A549 (cell line): ENCODE measurements at regions of chr17 and their contacts with region 1.

Region 1: GRCh38 chr17:45385331-45385997 is 47.2 kb downstream of the ARHGAP27 start:
- DNase-seq: peak; percentile 91 to 94
- ATAC-seq: peak; percentile 93 to 97
- H3K4me3 ChIP-seq: no peak overlapping the region
- H3K27ac ChIP-seq: peak overlapping the region; percentile 79 to 97
- H3K4me1 ChIP-seq: peaks cover 50% of the 10 kb centered on the region
- CTCF ChIP-seq: peak; percentile 99
- EP300 ChIP-seq: no peak
- POLR2A ChIP-seq: no peak
- RAD21 ChIP-seq: peak; percentile 100

Region 2: DNA sequence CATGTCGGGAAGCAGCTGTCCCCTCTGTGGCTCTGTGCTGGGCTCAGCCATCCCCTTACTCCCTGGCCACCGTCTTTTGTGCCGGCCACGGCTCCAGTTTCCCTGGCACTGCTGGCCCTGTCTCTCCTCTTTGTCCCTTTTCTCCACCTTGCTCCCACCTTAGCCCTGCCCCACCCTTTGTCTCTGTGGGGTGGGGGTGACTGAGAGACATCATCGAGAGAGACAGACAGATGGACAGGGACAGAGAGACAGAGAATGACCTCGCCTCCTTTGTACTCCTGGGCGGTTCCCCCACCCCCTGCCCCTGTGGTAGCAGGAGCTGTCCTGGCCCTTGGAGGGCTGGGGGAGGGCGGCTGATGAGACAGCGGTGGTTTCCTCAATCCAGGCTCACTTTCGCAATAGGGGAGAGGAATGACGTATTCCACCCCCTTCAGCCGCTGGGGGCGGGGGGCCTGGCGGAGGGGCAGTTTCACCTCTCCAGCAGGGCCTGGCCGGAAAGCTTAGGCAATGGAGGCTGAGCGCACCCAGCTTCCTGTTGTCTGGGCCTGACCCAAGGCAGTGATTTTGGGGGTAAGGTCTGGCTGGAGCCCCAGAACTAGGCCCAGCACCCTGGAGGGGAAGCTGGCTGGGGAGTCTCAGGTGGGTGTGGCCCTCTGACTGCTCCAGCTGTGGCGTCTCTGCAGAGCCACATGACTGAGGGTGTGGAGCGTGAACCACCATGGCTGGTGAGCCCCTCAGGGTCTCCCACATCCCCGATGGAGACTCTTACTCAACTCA is 156.5 kb before region 1 on chr17:
- CTCF ChIA-PET with region 1: interaction called, 299 read pairs
- POLR2A ChIA-PET with region 1: interaction called, 3 read pairs
- DNase-seq: peak; percentile 96 to 99
- ATAC-seq: peak; percentile 63 to 77
- H3K4me3 ChIP-seq: peak overlapping the region; percentile 9; the same call in 1 of the 3 replicates
- H3K27ac ChIP-seq: peak overlapping the region; percentile 97
- H3K4me1 ChIP-seq: peaks cover 85% of the 10 kb centered on the region
- CTCF ChIP-seq: no peak
- EP300 ChIP-seq: peak; percentile 93 to 99
- POLR2A ChIP-seq: peak; percentile 33
- RAD21 ChIP-seq: no peak; a peak in 3 of 5 replicates

Region 3: GRCh38 chr17:45241328-45242011 is 144.0 kb before region 1 on chr17:
- CTCF ChIA-PET with region 1: interaction called, 128 read pairs
- POLR2A ChIA-PET with region 1: no interaction called
- DNase-seq: no peak
- ATAC-seq: no peak
- H3K4me3 ChIP-seq: no peak overlapping the region
- H3K27ac ChIP-seq: no peak overlapping the region; a peak in 1 of 6 replicates
- H3K4me1 ChIP-seq: peaks cover 13% of the 10 kb centered on the region
- CTCF ChIP-seq: no peak
- EP300 ChIP-seq: no peak
- POLR2A ChIP-seq: no peak
- RAD21 ChIP-seq: no peak

Region 4: GRCh38 chr17:45317112-45317928 is 68.1 kb before region 1 on chr17:
- CTCF ChIA-PET with region 1: interaction called, 640 read pairs
- POLR2A ChIA-PET with region 1: interaction called, 8 read pairs
- DNase-seq: peak; percentile 100
- ATAC-seq: peak; percentile 79 to 83
- H3K4me3 ChIP-seq: peak overlapping the region; percentile 69
- H3K27ac ChIP-seq: peak overlapping the region; percentile 95
- H3K4me1 ChIP-seq: peaks cover 73% of the 10 kb centered on the region
- CTCF ChIP-seq: no peak
- EP300 ChIP-seq: no peak
- POLR2A ChIP-seq: peak; percentile 68
- RAD21 ChIP-seq: no peak

Region 5: GRCh38 chr17:45371414-45372327 is 13.8 kb before region 1 on chr17:
- CTCF ChIA-PET with region 1: interaction called, 294 read pairs
- POLR2A ChIA-PET with region 1: interaction called, 3 read pairs
- DNase-seq: peak; percentile 98
- ATAC-seq: peak; percentile 93 to 95
- H3K4me3 ChIP-seq: no peak overlapping the region; the same call in 2 of the 3 replicates
- H3K27ac ChIP-seq: peak overlapping the region; percentile 95 to 97
- H3K4me1 ChIP-seq: peaks cover 84% of the 10 kb centered on the region
- CTCF ChIP-seq: no peak; the same call in 1 of the 3 replicates
- EP300 ChIP-seq: peak; percentile 97 to 99
- POLR2A ChIP-seq: no peak; the same call in 1 of the 2 replicates
- RAD21 ChIP-seq: peak; percentile 44 to 71; a peak in 4 of 5 replicates

Region 6: DNA sequence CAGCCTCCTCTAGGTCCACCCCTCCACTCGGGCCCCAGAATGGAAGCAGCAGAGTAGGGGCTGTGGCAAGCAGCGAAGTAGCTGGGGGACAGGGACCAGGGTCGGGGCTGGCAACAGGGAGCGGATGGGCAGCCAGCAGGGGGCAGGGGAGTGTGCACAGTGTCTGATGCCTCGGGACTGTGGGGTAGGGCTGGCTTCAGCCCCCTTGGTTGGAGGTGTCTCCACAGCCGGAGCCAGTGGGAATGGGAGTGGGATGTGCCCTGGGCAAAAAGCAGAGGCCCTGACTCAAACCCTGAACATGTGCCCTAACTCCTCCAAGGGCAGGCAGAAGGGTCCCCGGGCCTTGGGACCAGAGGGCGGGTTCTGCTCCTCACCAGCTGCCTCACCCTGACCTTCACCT is 65.7 kb after region 1 on chr17:
- CTCF ChIA-PET with region 1: no interaction called
- POLR2A ChIA-PET with region 1: no interaction called
- DNase-seq: peak in 1 of 2 experiments; percentile 7
- ATAC-seq: peak in 1 of 2 experiments; percentile 70; a peak in 3 of 6 replicates
- H3K4me3 ChIP-seq: no peak overlapping the region
- H3K27ac ChIP-seq: no peak overlapping the region
- H3K4me1 ChIP-seq: peaks cover 14% of the 10 kb centered on the region; the same call in 2 of the 3 replicates
- CTCF ChIP-seq: no peak
- EP300 ChIP-seq: no peak
- POLR2A ChIP-seq: no peak
- RAD21 ChIP-seq: peak in 1 of 2 experiments; percentile 24; a peak in 1 of 5 replicates